CD4-positive, alpha-beta memory T cell (primary cell): ENCODE measurements at regions of chr22 and their contacts with region 1.

Region 1: GRCh38 chr22:31080848-31081649 is at the start of gene SMTN:
- DNase-seq: peak; percentile 82 to 86 (median 84)
- H3K4me3 ChIP-seq: peak within 1 kb of the TSS; percentile 0 to 71
- H3K4me3 Mint-ChIP-seq: peak within 1 kb of the TSS; percentile 85 to 92 (median 90)
- H3K27ac ChIP-seq: peak within 1 kb of the TSS; percentile 25
- H3K27ac Mint-ChIP-seq: peak within 1 kb of the TSS; percentile 52 to 87 (median 73)
- H3K4me1 ChIP-seq: peaks cover 43% of the 10 kb centered on the region
- H3K4me1 Mint-ChIP-seq: peaks cover 18 to 40% (median 28%) of the 10 kb centered on the region in 4 donors
- H3K27me3 ChIP-seq: no peaks in the 10 kb centered on the region
- H3K27me3 Mint-ChIP-seq: no peaks in the 10 kb centered on the region
- total RNA-seq, gene SMTN: 1.6 to 1.7 TPM

Region 2: GRCh38 chr22:30763815-30764686 is 317.0 kb before region 1 on chr22:
- CTCF ChIA-PET with region 1: interaction called, 18 read pairs
- POLR2A ChIA-PET with region 1: no interaction called
- intact Hi-C with region 1: loop called (anchors 1 kb)
- DNase-seq: peak; percentile 52 to 67 (median 57)
- H3K4me3 ChIP-seq: no peak overlapping the region
- H3K4me3 Mint-ChIP-seq: no peak overlapping the region
- H3K27ac ChIP-seq: no peak overlapping the region
- H3K27ac Mint-ChIP-seq: no peak overlapping the region
- H3K4me1 ChIP-seq: no peaks in the 10 kb centered on the region
- H3K4me1 Mint-ChIP-seq: no peaks in the 10 kb centered on the region
- H3K27me3 ChIP-seq: no peaks in the 10 kb centered on the region
- H3K27me3 Mint-ChIP-seq: no peaks in the 10 kb centered on the region

Region 3: GRCh38 chr22:30940685-30941362 is 140.2 kb before region 1 on chr22:
- CTCF ChIA-PET with region 1: interaction called, 54 read pairs
- POLR2A ChIA-PET with region 1: interaction called, 13 read pairs
- intact Hi-C with region 1: loop called (anchors 2 kb)
- DNase-seq: peak; percentile 49 to 66 (median 60)
- H3K4me3 ChIP-seq: peak overlapping the region; percentile 48 to 63
- H3K4me3 Mint-ChIP-seq: peak overlapping the region; percentile 86 to 94 (median 90)
- H3K27ac ChIP-seq: peak overlapping the region; percentile 57
- H3K27ac Mint-ChIP-seq: peak overlapping the region; percentile 89 to 97 (median 94)
- H3K4me1 ChIP-seq: peaks cover 88% of the 10 kb centered on the region
- H3K4me1 Mint-ChIP-seq: peaks cover 57 to 96% (median 77%) of the 10 kb centered on the region in 4 donors
- H3K27me3 ChIP-seq: no peaks in the 10 kb centered on the region
- H3K27me3 Mint-ChIP-seq: no peaks in the 10 kb centered on the region

Region 4: GRCh38 chr22:30968924-30969539 is 112.0 kb before region 1 on chr22 and contains the start of gene TUG1:
- CTCF ChIA-PET with region 1: interaction called, 10 read pairs
- POLR2A ChIA-PET with region 1: interaction called, 26 read pairs
- intact Hi-C with region 1: loop called (anchors 1 kb)
- DNase-seq: peak; percentile 97 to 99 (median 98)
- H3K4me3 ChIP-seq: peak within 1 kb of the TSS; percentile 68 to 80
- H3K4me3 Mint-ChIP-seq: peak within 1 kb of the TSS; percentile 89 to 96 (median 94)
- H3K27ac ChIP-seq: peak within 1 kb of the TSS; percentile 90
- H3K27ac Mint-ChIP-seq: peak within 1 kb of the TSS; percentile 94 to 98 (median 97)
- H3K4me1 ChIP-seq: peaks cover 39% of the 10 kb centered on the region
- H3K4me1 Mint-ChIP-seq: peaks cover 30 to 69% (median 52%) of the 10 kb centered on the region in 4 donors
- H3K27me3 ChIP-seq: no peaks in the 10 kb centered on the region
- H3K27me3 Mint-ChIP-seq: no peaks in the 10 kb centered on the region
- total RNA-seq, gene TUG1: 129 to 132 TPM

Region 5: GRCh38 chr22:30989474-30989873 is 91.6 kb before region 1 on chr22:
- CTCF ChIA-PET with region 1: no interaction called
- POLR2A ChIA-PET with region 1: no interaction called
- intact Hi-C with region 1: no loop called
- DNase-seq: no peak
- H3K4me3 ChIP-seq: no peak overlapping the region
- H3K4me3 Mint-ChIP-seq: peak overlapping the region in 1 of 8 donors; percentile 0
- H3K27ac ChIP-seq: no peak overlapping the region
- H3K27ac Mint-ChIP-seq: no peak overlapping the region
- H3K4me1 ChIP-seq: no peaks in the 10 kb centered on the region
- H3K4me1 Mint-ChIP-seq: no peaks in the 10 kb centered on the region
- H3K27me3 ChIP-seq: no peaks in the 10 kb centered on the region
- H3K27me3 Mint-ChIP-seq: peaks cover 1 to 3% of the 10 kb centered on the region in 2 donors

Region 6: GRCh38 chr22:31278622-31279326 is 197.7 kb after region 1 on chr22:
- CTCF ChIA-PET with region 1: no interaction called
- POLR2A ChIA-PET with region 1: interaction called, 19 read pairs
- intact Hi-C with region 1: no loop called
- DNase-seq: peak; percentile 64 to 76 (median 73)
- H3K4me3 ChIP-seq: peak overlapping the region in 1 of 2 donors; percentile 17
- H3K4me3 Mint-ChIP-seq: peak overlapping the region; percentile 38 to 84 (median 77)
- H3K27ac ChIP-seq: peak overlapping the region; percentile 43
- H3K27ac Mint-ChIP-seq: peak overlapping the region; percentile 94 to 99 (median 97)
- H3K4me1 ChIP-seq: peaks cover 87% of the 10 kb centered on the region
- H3K4me1 Mint-ChIP-seq: peaks cover 57 to 92% (median 73%) of the 10 kb centered on the region in 4 donors
- H3K27me3 ChIP-seq: no peaks in the 10 kb centered on the region
- H3K27me3 Mint-ChIP-seq: no peaks in the 10 kb centered on the region